ENCODE measurements at regions of chr4 and their contacts with region 1.

Region 1: DNA sequence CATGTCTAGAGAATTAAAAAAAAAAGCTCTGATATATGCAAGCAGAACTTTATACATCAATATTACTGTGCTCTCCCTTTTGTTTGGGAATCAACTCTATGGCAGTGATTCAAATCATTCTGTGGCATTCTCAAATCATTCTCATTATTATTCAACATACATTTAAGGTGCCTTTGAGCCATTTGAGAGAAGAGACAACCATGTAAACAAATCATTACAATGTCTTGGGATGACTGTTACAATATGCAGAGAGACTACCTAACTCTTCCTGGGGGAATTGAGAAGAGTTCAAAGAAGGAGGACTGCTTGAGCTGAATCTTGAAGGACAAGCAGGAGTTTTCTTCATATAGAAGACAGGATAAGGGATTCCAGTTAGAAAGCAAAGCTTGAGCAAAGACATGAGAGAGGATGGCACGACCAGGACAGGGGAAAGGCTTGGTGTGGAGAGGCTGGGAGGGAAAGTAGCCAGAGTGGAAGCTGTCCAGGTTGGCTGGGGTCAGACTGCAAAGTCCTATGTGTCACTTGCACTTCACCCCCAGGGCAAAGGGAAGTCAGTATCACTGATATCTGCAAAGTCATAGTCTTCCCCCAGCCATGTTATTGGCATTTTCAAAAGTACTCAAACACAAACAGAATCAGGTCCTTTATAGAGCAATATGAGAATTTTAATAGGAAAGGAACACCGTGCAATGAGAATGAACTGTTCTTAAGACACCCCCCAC is 9.0 kb downstream of the SEC24D start:
- DNase-seq: no peak
- ATAC-seq: no peak
- H3K4me3 ChIP-seq: no peak overlapping the region
- H3K27ac ChIP-seq: no peak overlapping the region
- H3K4me1 ChIP-seq: peaks cover 10% of the 10 kb centered on the region
- H3K27me3 ChIP-seq: no peaks in the 10 kb centered on the region
- CTCF ChIP-seq: no peak

Region 2: DNA sequence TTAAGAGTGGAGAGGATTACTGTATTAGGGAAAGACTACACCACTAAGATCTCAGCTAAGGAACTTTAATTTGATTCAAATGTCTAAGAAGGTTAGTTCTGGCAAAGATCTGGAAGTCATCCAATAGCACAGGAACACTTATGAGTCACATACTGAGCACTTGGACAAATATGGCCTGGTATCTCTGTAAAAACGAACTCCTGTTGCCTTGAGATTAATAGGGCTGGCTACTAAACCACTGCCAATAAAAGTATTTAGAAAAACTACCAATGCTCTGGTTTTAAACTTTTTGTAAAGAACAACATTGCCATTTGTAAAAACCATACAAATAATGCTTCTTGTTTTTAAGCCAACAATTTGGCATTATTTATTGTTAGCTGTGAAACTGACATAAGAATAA is 61.5 kb before region 1 on chr4:
- CTCF ChIA-PET with region 1: no interaction called
- POLR2A ChIA-PET with region 1: no interaction called
- intact Hi-C with region 1: no loop called
- DNase-seq: peak; percentile 82
- ATAC-seq: peak; percentile 94
- H3K4me3 ChIP-seq: no peak overlapping the region
- H3K27ac ChIP-seq: 0 out of 2 replicates have a peak overlapping the region, but pooled peaks have one; percentile 5
- H3K4me1 ChIP-seq: peaks cover 16% of the 10 kb centered on the region
- H3K27me3 ChIP-seq: no peaks in the 10 kb centered on the region
- CTCF ChIP-seq: no peak

Region 3: DNA sequence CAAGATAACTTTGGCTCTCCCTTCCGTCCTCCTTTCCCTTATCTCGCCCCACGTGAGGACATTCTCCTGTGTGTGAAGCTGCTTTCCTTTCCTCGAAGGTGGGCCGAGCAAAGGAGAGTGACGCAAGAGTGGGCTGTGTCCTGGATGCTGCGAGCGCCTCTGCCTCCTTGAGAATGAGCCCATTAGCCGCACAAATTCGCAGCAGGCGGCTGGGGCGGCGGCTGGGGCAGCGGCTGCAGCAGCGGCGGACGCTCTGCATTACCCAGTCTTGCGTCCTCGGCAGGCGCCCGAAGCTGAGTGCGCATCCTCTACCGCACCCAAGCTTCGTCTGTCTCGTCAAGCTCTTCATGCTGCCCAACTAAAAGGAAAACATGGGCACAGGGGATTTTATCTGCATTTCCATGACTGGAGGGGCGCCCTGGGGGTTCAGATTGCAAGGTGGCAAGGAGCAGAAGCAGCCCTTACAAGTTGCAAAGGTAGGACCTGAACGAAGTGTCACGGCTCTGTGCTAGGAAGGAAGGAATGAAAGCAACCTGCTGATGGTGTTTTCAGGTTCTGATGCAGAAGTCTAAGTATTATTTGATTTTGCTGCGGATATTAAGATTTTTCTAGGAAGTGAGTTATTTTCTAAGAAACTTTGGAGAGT is 61.9 kb after region 1 on chr4 and contains the start of gene SYNPO2:
- CTCF ChIA-PET with region 1: no interaction called
- POLR2A ChIA-PET with region 1: interaction called, 5 read pairs
- intact Hi-C with region 1: loop called (anchors 5 kb)
- DNase-seq: peak; percentile 59
- ATAC-seq: peak; percentile 97
- H3K4me3 ChIP-seq: peak within 1 kb of the TSS; percentile 68
- H3K27ac ChIP-seq: no peak within 1 kb of the TSS
- H3K4me1 ChIP-seq: 0 out of 2 replicates have a peak, but pooled peaks cover 5% of the 10 kb centered on the region
- H3K27me3 ChIP-seq: no peaks in the 10 kb centered on the region
- CTCF ChIP-seq: no peak
- total RNA-seq, gene SYNPO2: 0.04 and 0.06 TPM in 2 replicates

Region 4: GRCh38 chr4:119113033-119113655 is 286.3 kb after region 1 on chr4:
- CTCF ChIA-PET with region 1: no interaction called
- POLR2A ChIA-PET with region 1: no interaction called
- intact Hi-C with region 1: no loop called
- DNase-seq: peak; percentile 88
- ATAC-seq: peak; percentile 88
- H3K4me3 ChIP-seq: no peak overlapping the region
- H3K27ac ChIP-seq: peak overlapping the region; percentile 50
- H3K4me1 ChIP-seq: peaks cover 13% of the 10 kb centered on the region
- H3K27me3 ChIP-seq: no peaks in the 10 kb centered on the region
- CTCF ChIP-seq: no peak

Region 5: GRCh38 chr4:119151161-119151560 is 324.3 kb after region 1 on chr4:
- CTCF ChIA-PET with region 1: no interaction called
- POLR2A ChIA-PET with region 1: no interaction called
- intact Hi-C with region 1: no loop called
- DNase-seq: no peak
- ATAC-seq: no peak
- H3K4me3 ChIP-seq: no peak overlapping the region
- H3K27ac ChIP-seq: no peak overlapping the region
- H3K4me1 ChIP-seq: no peaks in the 10 kb centered on the region
- H3K27me3 ChIP-seq: no peaks in the 10 kb centered on the region
- CTCF ChIP-seq: no peak